IMR-90 (cell line): ENCODE measurements at regions of chr3 and their contacts with region 1.

Region 1: GRCh38 chr3:148955544-148956346 is 35.6 kb upstream of the GYG1 start:
- DNase-seq: peak; percentile 95
- ATAC-seq: peak; percentile 76
- H3K4me3 ChIP-seq: no peak overlapping the region
- H3K27ac ChIP-seq: peak overlapping the region; percentile 74
- H3K4me1 ChIP-seq: peaks cover 13% of the 10 kb centered on the region
- H3K27me3 ChIP-seq: no peaks in the 10 kb centered on the region
- CTCF ChIP-seq: peak; percentile 86
- POLR2A ChIP-seq: no peak
- RAD21 ChIP-seq: peak; percentile 81

Region 2: GRCh38 chr3:149016669-149017541 is 61.2 kb after region 1 on chr3:
- CTCF ChIA-PET with region 1: no interaction called
- POLR2A ChIA-PET with region 1: no interaction called
- dilution Hi-C with region 1: no loop called
- in situ Hi-C with region 1: no loop called
- intact Hi-C with region 1: loop called (anchors 5 kb)
- DNase-seq: peak; percentile 98
- ATAC-seq: peak; percentile 74
- H3K4me3 ChIP-seq: no peak overlapping the region
- H3K27ac ChIP-seq: peak overlapping the region; percentile 99
- H3K4me1 ChIP-seq: peaks cover 40% of the 10 kb centered on the region
- H3K27me3 ChIP-seq: no peaks in the 10 kb centered on the region
- CTCF ChIP-seq: no peak
- POLR2A ChIP-seq: no peak
- RAD21 ChIP-seq: no peak

Region 3: GRCh38 chr3:149120051-149120972 is 164.6 kb after region 1 on chr3:
- CTCF ChIA-PET with region 1: interaction called, 8 read pairs
- POLR2A ChIA-PET with region 1: no interaction called
- dilution Hi-C with region 1: no loop called
- in situ Hi-C with region 1: loop called (anchors 5 kb)
- intact Hi-C with region 1: loop called (anchors 2 kb)
- DNase-seq: peak; percentile 76
- ATAC-seq: peak; percentile 85
- H3K4me3 ChIP-seq: no peak overlapping the region
- H3K27ac ChIP-seq: no peak overlapping the region
- H3K4me1 ChIP-seq: no peaks in the 10 kb centered on the region
- H3K27me3 ChIP-seq: no peaks in the 10 kb centered on the region
- CTCF ChIP-seq: peak; percentile 79
- POLR2A ChIP-seq: no peak
- RAD21 ChIP-seq: peak; percentile 86

Region 4: DNA sequence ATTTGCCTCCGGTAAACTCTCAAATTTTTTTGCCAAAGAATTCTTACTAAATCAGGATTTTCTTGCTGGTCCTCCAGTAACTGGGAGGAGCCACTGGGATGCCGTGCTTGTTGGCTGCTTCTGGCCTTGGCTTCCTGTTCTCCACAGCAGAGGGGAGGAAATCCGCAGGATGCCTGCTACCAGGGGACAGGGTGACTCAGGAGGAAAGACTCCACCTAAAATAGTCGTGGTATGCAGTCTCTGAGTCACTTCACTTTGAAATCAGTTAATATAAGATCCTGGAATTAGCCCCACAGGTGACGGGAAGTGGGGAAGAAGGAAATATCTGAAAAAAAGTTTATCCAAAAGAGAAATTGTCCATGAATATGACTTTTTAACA is 384.2 kb after region 1 on chr3:
- CTCF ChIA-PET with region 1: no interaction called
- POLR2A ChIA-PET with region 1: no interaction called
- dilution Hi-C with region 1: no loop called
- in situ Hi-C with region 1: loop called (anchors 10 kb)
- intact Hi-C with region 1: no loop called
- DNase-seq: peak; percentile 97
- ATAC-seq: peak; percentile 94
- H3K4me3 ChIP-seq: no peak overlapping the region
- H3K27ac ChIP-seq: peak overlapping the region; percentile 56
- H3K4me1 ChIP-seq: peaks cover 14% of the 10 kb centered on the region
- H3K27me3 ChIP-seq: no peaks in the 10 kb centered on the region
- CTCF ChIP-seq: no peak
- POLR2A ChIP-seq: no peak
- RAD21 ChIP-seq: no peak

Region 5: DNA sequence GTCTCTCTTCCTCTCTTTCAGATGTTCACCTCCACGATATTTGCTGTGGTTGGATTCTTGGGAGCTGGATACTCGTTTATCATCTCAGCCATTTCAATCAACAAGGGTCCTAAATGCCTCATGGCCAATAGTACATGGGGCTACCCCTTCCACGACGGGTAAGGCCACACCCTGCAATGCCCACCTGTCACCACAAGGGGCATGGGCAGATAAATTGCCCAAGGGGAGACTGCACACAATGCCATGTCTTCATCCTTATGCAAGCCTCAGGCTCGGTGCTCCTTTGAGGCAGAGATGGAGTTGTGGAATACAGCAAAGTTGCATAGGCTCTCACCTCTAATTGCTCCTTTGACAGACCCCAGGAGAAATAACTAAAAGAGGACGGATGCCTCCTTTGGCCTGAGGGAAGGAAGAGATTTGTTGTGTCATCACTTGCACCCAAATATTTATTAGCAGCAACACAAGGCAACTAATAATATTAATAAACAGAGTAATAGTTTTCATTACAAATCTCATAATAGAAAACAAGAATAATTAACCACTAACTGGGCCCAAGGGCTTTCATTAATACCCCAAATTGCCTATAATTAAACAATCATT is 532.0 kb after region 1 on chr3:
- CTCF ChIA-PET with region 1: no interaction called
- POLR2A ChIA-PET with region 1: no interaction called
- dilution Hi-C with region 1: no loop called
- in situ Hi-C with region 1: loop called (anchors 10 kb)
- intact Hi-C with region 1: loop called (anchors 5 kb)
- DNase-seq: no peak
- ATAC-seq: no peak
- H3K4me3 ChIP-seq: no peak overlapping the region
- H3K27ac ChIP-seq: no peak overlapping the region
- H3K4me1 ChIP-seq: peaks cover 2% of the 10 kb centered on the region
- H3K27me3 ChIP-seq: no peaks in the 10 kb centered on the region
- CTCF ChIP-seq: no peak; the same call in 1 of the 2 replicates
- POLR2A ChIP-seq: no peak
- RAD21 ChIP-seq: no peak